Caco-2 (cell line): ENCODE measurements at regions of chr13 and their contacts with region 1.

Region 1: DNA sequence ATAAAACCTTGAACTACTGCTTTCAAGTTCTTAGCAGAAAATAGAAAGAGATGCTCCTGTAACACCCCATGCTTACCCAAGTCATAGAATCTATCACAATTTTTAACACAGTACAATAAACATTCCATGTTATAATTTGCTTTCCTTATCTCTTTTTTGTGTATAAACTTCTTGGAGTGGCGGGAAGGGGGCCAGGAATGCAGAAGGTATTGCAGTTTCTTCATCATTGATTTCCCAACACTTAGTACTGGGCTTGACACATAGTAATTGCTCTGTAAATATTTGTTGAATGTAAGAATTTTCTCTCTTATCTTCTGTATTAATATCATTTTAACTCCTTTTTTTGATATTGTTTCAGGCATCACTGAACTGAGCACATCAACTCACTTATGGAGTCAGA is 535.8 kb downstream of the KCTD12 start:
- DNase-seq: peak; percentile 75 to 80
- H3K4me3 ChIP-seq: no peak overlapping the region
- H3K4me3 Mint-ChIP-seq: no peak overlapping the region
- H3K27ac Mint-ChIP-seq: peak overlapping the region; percentile 36
- H3K4me1 ChIP-seq: peaks cover 29% of the 10 kb centered on the region
- H3K4me1 Mint-ChIP-seq: peaks cover 25% of the 10 kb centered on the region
- H3K27me3 ChIP-seq: no peaks in the 10 kb centered on the region
- H3K27me3 Mint-ChIP-seq: no peaks in the 10 kb centered on the region
- CTCF ChIP-seq: no peak

Region 2: GRCh38 chr13:76009491-76009890 is 340.9 kb before region 1 on chr13:
- CTCF ChIA-PET with region 1: no interaction called
- POLR2A ChIA-PET with region 1: no interaction called
- intact Hi-C with region 1: loop called (anchors 2 kb)
- DNase-seq: peak in 1 of 2 experiments; percentile 48
- H3K4me3 ChIP-seq: no peak overlapping the region
- H3K4me3 Mint-ChIP-seq: peak overlapping the region; percentile 61
- H3K27ac Mint-ChIP-seq: peak overlapping the region; percentile 95
- H3K4me1 ChIP-seq: peaks cover 95% of the 10 kb centered on the region
- H3K4me1 Mint-ChIP-seq: peaks cover 53% of the 10 kb centered on the region
- H3K27me3 ChIP-seq: no peaks in the 10 kb centered on the region
- H3K27me3 Mint-ChIP-seq: no peaks in the 10 kb centered on the region
- CTCF ChIP-seq: no peak

Region 3: GRCh38 chr13:76023652-76024051 is 326.7 kb before region 1 on chr13:
- CTCF ChIA-PET with region 1: no interaction called
- POLR2A ChIA-PET with region 1: no interaction called
- intact Hi-C with region 1: loop called (anchors 2 kb)
- DNase-seq: peak in 1 of 2 experiments; percentile 24
- H3K4me3 ChIP-seq: no peak overlapping the region
- H3K4me3 Mint-ChIP-seq: peak overlapping the region; percentile 33
- H3K27ac Mint-ChIP-seq: peak overlapping the region; percentile 91
- H3K4me1 ChIP-seq: peaks cover 48% of the 10 kb centered on the region
- H3K4me1 Mint-ChIP-seq: peaks cover 47% of the 10 kb centered on the region
- H3K27me3 ChIP-seq: no peaks in the 10 kb centered on the region
- H3K27me3 Mint-ChIP-seq: no peaks in the 10 kb centered on the region
- CTCF ChIP-seq: no peak

Region 4: DNA sequence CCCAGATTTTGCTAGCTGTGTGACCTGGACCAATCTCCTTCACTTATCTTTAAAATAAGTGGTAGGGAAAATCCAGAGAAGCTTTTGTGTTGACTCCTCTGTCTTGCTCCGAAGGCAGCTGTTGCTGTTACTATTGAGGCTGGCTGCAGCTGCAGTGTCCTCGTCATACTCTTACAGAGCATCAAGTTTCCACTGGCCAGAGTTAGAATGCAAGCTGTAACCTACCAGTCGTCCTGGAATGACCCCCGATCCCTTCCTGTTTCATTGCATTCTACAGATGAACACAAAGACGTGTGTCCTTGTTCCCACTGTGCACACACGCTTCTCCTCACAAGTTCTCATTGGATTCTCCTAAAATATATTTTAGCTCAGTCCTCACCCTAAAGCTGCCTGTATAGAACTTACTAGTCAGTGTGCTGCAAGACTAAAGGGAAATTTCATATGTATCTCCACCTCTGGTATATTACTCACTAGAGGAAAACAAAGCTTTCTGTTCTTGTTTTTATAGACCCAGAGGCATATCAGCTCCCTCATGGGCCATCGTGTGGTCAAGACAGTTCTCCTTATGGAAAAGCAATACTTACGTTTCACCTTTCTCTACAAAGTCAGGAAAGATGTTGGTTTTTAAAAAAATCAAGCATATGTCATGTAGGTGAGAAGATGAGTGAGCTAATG is 124.4 kb before region 1 on chr13:
- CTCF ChIA-PET with region 1: no interaction called
- POLR2A ChIA-PET with region 1: no interaction called
- intact Hi-C with region 1: no loop called
- DNase-seq: no peak
- H3K4me3 ChIP-seq: no peak overlapping the region
- H3K4me3 Mint-ChIP-seq: no peak overlapping the region
- H3K27ac Mint-ChIP-seq: no peak overlapping the region
- H3K4me1 ChIP-seq: no peaks in the 10 kb centered on the region
- H3K4me1 Mint-ChIP-seq: no peaks in the 10 kb centered on the region
- H3K27me3 ChIP-seq: no peaks in the 10 kb centered on the region
- H3K27me3 Mint-ChIP-seq: no peaks in the 10 kb centered on the region
- CTCF ChIP-seq: no peak

Region 5: GRCh38 chr13:76250211-76250610 is 100.2 kb before region 1 on chr13:
- CTCF ChIA-PET with region 1: no interaction called
- POLR2A ChIA-PET with region 1: no interaction called
- intact Hi-C with region 1: loop called (anchors 2 kb)
- DNase-seq: no peak
- H3K4me3 ChIP-seq: no peak overlapping the region
- H3K4me3 Mint-ChIP-seq: no peak overlapping the region
- H3K27ac Mint-ChIP-seq: no peak overlapping the region
- H3K4me1 ChIP-seq: peaks cover 11% of the 10 kb centered on the region
- H3K4me1 Mint-ChIP-seq: peaks cover 8% of the 10 kb centered on the region
- H3K27me3 ChIP-seq: no peaks in the 10 kb centered on the region
- H3K27me3 Mint-ChIP-seq: no peaks in the 10 kb centered on the region
- CTCF ChIP-seq: no peak

Region 6: DNA sequence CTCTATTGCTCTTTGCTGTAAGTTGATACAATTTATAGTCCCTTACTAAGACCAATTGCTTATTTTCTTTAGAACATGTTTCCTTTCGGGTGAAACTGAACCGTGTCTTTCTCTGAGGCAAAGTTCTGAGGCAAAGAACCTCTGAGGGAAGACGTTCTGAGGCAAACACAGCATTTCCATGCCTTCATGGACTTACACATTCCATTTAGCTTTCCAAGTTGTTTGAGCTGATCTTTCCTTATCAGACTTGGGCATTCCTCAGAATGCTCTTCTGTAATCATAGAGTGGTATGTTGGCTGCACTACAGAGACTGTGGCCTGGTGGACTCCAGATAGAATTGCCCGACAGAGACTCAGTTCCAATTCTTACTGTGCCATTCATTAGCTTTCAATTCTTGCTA is 43.3 kb before region 1 on chr13:
- CTCF ChIA-PET with region 1: no interaction called
- POLR2A ChIA-PET with region 1: no interaction called
- intact Hi-C with region 1: loop called (anchors 2 kb)
- DNase-seq: peak; percentile 55 to 59
- H3K4me3 ChIP-seq: no peak overlapping the region
- H3K4me3 Mint-ChIP-seq: peak overlapping the region; percentile 68
- H3K27ac Mint-ChIP-seq: peak overlapping the region; percentile 94
- H3K4me1 ChIP-seq: peaks cover 14% of the 10 kb centered on the region
- H3K4me1 Mint-ChIP-seq: peaks cover 10% of the 10 kb centered on the region
- H3K27me3 ChIP-seq: no peaks in the 10 kb centered on the region
- H3K27me3 Mint-ChIP-seq: no peaks in the 10 kb centered on the region
- CTCF ChIP-seq: peak in 1 of 2 experiments; percentile 18

Region 7: GRCh38 chr13:76397413-76397812 is 47.0 kb after region 1 on chr13:
- CTCF ChIA-PET with region 1: no interaction called
- POLR2A ChIA-PET with region 1: no interaction called
- intact Hi-C with region 1: no loop called
- DNase-seq: no peak
- H3K4me3 ChIP-seq: no peak overlapping the region
- H3K4me3 Mint-ChIP-seq: no peak overlapping the region
- H3K27ac Mint-ChIP-seq: no peak overlapping the region
- H3K4me1 ChIP-seq: no peaks in the 10 kb centered on the region
- H3K4me1 Mint-ChIP-seq: no peaks in the 10 kb centered on the region
- H3K27me3 ChIP-seq: no peaks in the 10 kb centered on the region
- H3K27me3 Mint-ChIP-seq: no peaks in the 10 kb centered on the region
- CTCF ChIP-seq: no peak

Region 8: GRCh38 chr13:76425935-76426334 is 75.5 kb after region 1 on chr13:
- CTCF ChIA-PET with region 1: no interaction called
- POLR2A ChIA-PET with region 1: no interaction called
- intact Hi-C with region 1: loop called (anchors 2 kb)
- DNase-seq: no peak
- H3K4me3 ChIP-seq: no peak overlapping the region
- H3K4me3 Mint-ChIP-seq: no peak overlapping the region
- H3K27ac Mint-ChIP-seq: no peak overlapping the region
- H3K4me1 ChIP-seq: no peaks in the 10 kb centered on the region
- H3K4me1 Mint-ChIP-seq: no peaks in the 10 kb centered on the region
- H3K27me3 ChIP-seq: no peaks in the 10 kb centered on the region
- H3K27me3 Mint-ChIP-seq: no peaks in the 10 kb centered on the region
- CTCF ChIP-seq: no peak

Region 9: DNA sequence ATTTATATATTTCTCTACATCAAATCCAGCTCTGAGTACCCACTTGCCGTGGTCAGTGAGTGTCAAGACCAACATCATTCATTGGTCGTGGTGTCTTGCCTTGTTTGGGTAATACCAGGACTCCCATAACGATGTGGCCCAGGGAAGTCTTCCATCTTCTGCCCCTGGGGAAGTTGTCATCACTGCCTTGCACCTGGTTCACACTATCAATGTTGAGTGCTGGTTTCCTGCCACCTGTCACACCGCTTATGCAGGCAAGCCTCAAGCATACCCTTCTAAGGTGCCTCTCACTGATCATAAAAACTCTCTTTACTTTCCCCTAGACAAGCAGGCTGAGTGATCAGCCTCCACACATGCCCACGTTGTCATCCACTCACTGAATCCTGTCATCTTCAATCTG is 153.4 kb after region 1 on chr13:
- CTCF ChIA-PET with region 1: no interaction called
- POLR2A ChIA-PET with region 1: no interaction called
- intact Hi-C with region 1: no loop called
- DNase-seq: no peak
- H3K4me3 ChIP-seq: no peak overlapping the region
- H3K4me3 Mint-ChIP-seq: no peak overlapping the region
- H3K27ac Mint-ChIP-seq: no peak overlapping the region
- H3K4me1 ChIP-seq: no peaks in the 10 kb centered on the region
- H3K4me1 Mint-ChIP-seq: no peaks in the 10 kb centered on the region
- H3K27me3 ChIP-seq: no peaks in the 10 kb centered on the region
- H3K27me3 Mint-ChIP-seq: peaks cover 25% of the 10 kb centered on the region
- CTCF ChIP-seq: no peak